SK-N-SH (cell line): ENCODE measurements at regions of chr12 and their contacts with region 1.

Region 1: DNA sequence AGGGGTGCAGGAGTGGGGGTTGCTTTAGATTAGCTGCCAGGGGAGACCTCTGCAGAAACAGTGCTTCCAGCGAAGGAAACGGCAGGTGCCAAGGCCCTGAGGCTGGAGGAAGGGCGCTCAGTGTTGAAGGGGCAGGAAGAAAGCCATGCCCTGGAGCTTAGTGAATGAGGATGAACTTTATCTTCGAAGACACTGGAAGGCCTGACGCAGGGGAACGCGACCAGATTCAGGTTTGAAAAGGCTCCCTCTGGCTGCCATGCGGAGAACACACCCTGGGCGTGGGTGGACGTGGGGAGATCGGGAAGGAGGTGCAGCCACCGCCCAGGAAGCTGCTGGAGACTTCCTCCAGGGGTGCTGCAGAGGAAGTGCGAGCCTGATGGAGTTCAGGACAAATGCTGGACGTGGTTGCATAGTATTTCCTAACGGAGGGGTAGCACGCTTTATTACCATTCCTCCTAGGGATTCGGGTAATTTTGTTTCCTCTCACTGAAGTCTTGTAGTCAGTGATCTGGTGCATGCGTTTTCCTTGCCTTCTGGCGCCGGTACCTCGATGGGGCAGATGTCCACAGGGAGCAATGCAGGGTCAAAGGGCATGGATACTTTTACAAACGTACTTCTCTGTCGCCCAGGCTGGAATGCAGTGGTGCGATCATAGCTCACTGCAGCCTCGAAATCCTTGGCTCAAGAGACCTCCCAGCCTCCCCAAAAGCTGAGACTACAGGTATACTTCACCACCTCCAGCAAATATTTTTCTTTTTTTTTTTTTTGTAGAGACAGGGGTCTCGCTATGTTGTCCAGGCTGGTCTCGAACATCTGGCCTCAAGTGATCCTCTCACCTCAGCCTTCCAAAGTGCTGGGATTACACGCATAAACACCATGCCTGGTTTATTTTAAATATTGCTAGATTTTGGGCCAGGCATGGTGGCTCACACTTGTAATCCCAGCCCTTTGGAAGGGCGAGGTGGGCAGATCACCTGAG is 26.4 kb upstream of the UBC start:
- DNase-seq: peak; percentile 82
- H3K4me3 ChIP-seq: peak overlapping the region; percentile 56 to 66
- H3K27ac ChIP-seq: peak overlapping the region; percentile 95 to 99
- H3K4me1 ChIP-seq: peaks cover 11 to 12% of the 10 kb centered on the region in 2 experiments; a peak in 3 of 4 replicates
- H3K27me3 ChIP-seq: no peaks in the 10 kb centered on the region
- CTCF ChIP-seq: peak; percentile 83
- EP300 ChIP-seq: no peak
- RAD21 ChIP-seq: peak; percentile 41; the same call in 1 of the 2 replicates

Region 2: DNA sequence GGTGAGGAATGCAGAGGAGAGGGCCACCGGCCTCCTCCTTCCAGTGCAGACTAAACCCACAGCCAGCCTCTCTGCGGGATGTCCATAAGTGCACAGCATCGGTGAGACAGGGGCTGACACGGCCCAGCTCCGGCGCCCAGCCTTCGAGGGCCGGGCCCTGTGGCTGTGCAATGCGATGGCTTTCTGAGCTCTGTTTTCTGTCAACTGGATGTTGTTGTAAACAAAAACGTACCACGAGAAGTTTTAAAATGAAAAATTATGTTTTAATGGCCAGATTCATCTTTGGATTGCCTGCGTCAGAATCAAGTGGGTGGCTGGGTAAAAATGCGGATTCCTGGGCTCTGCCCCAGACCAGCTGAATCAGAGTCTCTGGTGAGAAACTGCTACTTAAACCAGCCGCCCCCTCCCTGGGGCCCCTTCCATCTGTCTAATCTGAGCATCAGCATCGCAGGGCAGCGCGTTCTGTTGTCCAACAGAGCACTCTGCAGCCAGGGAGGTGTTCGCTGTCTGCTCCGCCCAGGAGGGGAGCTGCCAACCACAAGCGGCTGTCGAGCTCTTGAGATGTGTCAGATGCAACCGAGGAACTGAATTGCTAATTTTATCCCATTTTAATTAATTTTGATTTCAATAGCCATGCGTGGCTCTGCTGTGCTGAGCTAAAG is 512.6 kb before region 1 on chr12:
- CTCF ChIA-PET with region 1: no interaction called
- POLR2A ChIA-PET with region 1: no interaction called
- DNase-seq: peak; percentile 91
- H3K4me3 ChIP-seq: no peak overlapping the region
- H3K27ac ChIP-seq: peak overlapping the region; percentile 23 to 95; a peak in 2 of 4 replicates
- H3K4me1 ChIP-seq: peaks cover 18 to 88% of the 10 kb centered on the region in 2 experiments; a peak in 3 of 4 replicates
- H3K27me3 ChIP-seq: no peaks in the 10 kb centered on the region
- CTCF ChIP-seq: no peak
- EP300 ChIP-seq: peak in 1 of 2 experiments; percentile 80; a peak in 2 of 4 replicates
- RAD21 ChIP-seq: peak; percentile 52

Region 3: DNA sequence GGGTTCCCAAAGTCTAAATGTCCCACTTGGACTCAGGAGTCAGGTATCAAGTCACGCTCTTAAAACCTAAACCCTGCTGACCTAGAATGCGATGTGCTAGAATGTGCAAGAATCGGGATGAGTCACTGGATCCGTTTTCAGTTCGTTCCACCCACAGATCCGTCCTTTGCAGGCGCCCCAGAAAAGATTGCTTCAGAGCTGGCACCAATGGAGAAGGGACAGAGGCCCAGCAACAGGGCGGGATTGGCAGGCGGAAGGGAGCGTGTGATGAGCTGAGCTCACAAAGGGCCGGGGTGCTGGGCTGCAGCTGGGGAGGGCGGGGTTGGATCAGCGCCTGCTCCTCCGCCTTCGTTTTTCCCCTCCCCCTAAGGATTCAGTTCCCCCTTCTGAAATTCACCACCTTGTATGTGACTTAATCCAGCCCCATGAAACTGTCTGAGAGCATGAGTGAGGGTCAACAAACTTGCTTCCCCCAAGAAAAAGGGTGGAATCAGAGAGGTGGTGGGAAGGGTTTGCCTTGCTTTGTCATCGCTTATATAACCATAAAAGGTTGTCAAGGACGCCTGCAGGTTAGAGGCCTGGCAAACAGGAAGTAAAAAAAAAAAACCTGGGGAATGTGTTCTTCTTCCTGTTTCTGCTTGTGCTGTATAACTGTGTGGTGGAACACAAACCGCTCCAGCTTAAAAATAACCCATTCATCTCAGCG is 23.6 kb before region 1 on chr12:
- CTCF ChIA-PET with region 1: interaction called, 51 read pairs
- POLR2A ChIA-PET with region 1: interaction called, 25 read pairs
- DNase-seq: peak; percentile 83
- H3K4me3 ChIP-seq: peak overlapping the region; percentile 43 to 100
- H3K27ac ChIP-seq: peak overlapping the region; percentile 97 to 100
- H3K4me1 ChIP-seq: peaks cover 24 to 44% of the 10 kb centered on the region in 2 experiments; a peak in 3 of 4 replicates
- H3K27me3 ChIP-seq: no peaks in the 10 kb centered on the region
- CTCF ChIP-seq: no peak
- EP300 ChIP-seq: peak; percentile 83 to 94; a peak in 3 of 4 replicates
- RAD21 ChIP-seq: no peak

Region 4: DNA sequence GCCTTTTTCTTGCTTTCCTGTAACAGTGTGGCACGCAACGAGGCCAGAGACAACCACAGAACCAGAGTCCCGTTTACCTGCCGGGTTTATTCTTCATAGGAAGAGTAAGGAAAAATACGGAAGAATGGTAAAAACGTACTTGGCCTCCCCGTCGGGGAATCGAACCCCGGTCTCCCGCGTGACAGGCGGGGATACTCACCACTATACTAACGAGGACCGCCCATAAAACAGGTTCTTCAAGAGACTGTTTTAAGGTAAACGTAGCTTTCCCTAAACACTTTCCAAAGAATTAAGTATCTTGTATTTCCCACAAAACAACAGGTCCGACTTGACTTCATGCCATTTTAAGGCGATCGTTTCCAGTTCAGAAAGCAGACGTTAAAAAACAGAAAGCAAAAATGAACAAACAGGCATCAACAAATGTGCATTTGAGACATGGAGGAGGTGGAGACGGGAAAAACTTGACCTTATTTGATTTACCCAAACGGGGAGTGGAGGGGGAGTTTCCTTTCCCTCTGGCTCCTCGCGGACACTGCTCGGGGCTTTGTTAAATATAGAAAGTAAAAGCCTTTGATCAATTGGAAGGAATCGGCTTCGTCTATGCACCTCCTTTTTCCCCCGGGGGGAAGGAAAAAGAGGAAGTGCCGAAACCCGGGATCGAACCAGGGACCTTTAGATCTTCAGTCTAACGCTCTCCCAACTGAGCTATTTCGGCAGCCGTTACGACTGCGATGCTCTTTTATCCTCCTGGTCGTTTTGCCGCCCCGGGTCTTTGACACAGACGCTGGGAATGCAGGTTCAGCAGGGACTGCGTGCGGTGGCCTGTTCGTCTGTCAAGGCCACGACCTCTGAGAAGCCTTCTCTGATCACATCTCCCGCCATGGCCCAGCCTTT is 13.4 kb before region 1 on chr12:
- CTCF ChIA-PET with region 1: interaction called, 37 read pairs
- POLR2A ChIA-PET with region 1: interaction called, 17 read pairs
- DNase-seq: peak; percentile 89
- H3K4me3 ChIP-seq: peak overlapping the region; percentile 69 to 72
- H3K27ac ChIP-seq: peak overlapping the region; percentile 71 to 91
- H3K4me1 ChIP-seq: peaks cover 0 to 10% of the 10 kb centered on the region in 2 experiments; a peak in 1 of 4 replicates
- H3K27me3 ChIP-seq: no peaks in the 10 kb centered on the region
- CTCF ChIP-seq: no peak
- EP300 ChIP-seq: peak in 1 of 2 experiments; percentile 47; a peak in 1 of 4 replicates
- RAD21 ChIP-seq: no peak

Region 5: GRCh38 chr12:124952801-124953200 is 12.0 kb after region 1 on chr12:
- CTCF ChIA-PET with region 1: interaction called, 31 read pairs
- POLR2A ChIA-PET with region 1: no interaction called
- DNase-seq: peak; percentile 18
- H3K4me3 ChIP-seq: no peak overlapping the region
- H3K27ac ChIP-seq: no peak overlapping the region
- H3K4me1 ChIP-seq: no peaks in the 10 kb centered on the region
- H3K27me3 ChIP-seq: no peaks in the 10 kb centered on the region
- CTCF ChIP-seq: no peak
- EP300 ChIP-seq: no peak
- RAD21 ChIP-seq: no peak

Region 6: DNA sequence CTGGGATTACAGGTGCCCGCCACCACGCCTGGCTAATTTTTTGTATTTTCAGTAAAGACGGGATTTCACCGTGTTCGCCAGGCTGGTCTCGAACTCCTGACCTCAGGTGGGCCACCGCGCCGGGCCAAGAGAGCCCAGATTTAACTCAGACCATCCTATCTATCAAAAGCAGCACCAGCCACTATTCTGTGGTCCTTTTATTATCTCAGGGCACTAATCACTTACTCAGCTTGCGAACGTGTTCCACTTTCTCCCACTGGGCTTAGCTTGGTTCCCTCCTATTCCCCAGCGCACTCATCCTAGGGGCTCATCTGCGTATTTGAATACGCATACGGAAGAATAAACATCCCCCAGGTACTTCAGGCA is 108.2 kb after region 1 on chr12:
- CTCF ChIA-PET with region 1: interaction called, 5 read pairs
- POLR2A ChIA-PET with region 1: interaction called, 10 read pairs
- DNase-seq: no peak
- H3K4me3 ChIP-seq: peak overlapping the region; percentile 59 to 79
- H3K27ac ChIP-seq: peak overlapping the region in 1 of 2 experiments; percentile 28; a peak in 1 of 4 replicates
- H3K4me1 ChIP-seq: no peaks in the 10 kb centered on the region; a peak in 1 of 4 replicates
- H3K27me3 ChIP-seq: no peaks in the 10 kb centered on the region
- CTCF ChIP-seq: no peak
- EP300 ChIP-seq: no peak
- RAD21 ChIP-seq: no peak